Naive thymus-derived CD4-positive, alpha-beta T cell (primary cell): ENCODE measurements at regions of chr11 and their contacts with region 1.

Region 1: GRCh38 chr11:86174101-86175046 is 70.2 kb upstream of the EED start:
- DNase-seq: no peak
- ATAC-seq: peak; percentile 56
- H3K4me3 ChIP-seq: no peak overlapping the region
- H3K4me3 Mint-ChIP-seq: no peak overlapping the region
- H3K27ac ChIP-seq: no peak overlapping the region
- H3K27ac Mint-ChIP-seq: no peak overlapping the region
- H3K4me1 ChIP-seq: no peaks in the 10 kb centered on the region
- H3K4me1 Mint-ChIP-seq: peaks cover 0 to 25% (median 0%) of the 10 kb centered on the region in 7 donors
- H3K27me3 ChIP-seq: no peaks in the 10 kb centered on the region
- H3K27me3 Mint-ChIP-seq: peaks cover 0 to 13% (median 7%) of the 10 kb centered on the region in 5 donors

Region 2: DNA sequence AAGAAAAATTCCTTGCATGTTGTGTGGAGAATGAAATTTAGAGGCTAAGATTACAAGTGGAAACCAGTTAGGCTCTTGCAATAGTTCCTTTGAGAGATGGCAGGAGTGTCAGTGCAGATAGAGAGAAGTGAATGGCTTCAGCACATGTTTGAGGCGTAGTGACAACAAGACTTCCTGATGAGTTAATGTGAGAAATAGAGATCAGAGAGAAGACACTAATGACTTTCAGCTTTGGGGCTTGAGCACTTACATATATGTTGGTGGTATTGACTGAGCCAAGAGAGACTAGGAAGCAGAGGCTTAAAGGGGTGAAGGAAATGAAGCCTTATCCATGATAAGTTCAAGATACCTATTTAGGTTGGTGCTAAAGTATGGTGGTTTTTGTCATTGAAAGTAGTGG is 49.5 kb before region 1 on chr11:
- CTCF ChIA-PET with region 1: no interaction called
- POLR2A ChIA-PET with region 1: no interaction called
- intact Hi-C with region 1: loop called in 1 of 2 experiments (anchors 5 kb)
- DNase-seq: no peak
- ATAC-seq: no peak
- H3K4me3 ChIP-seq: no peak overlapping the region
- H3K4me3 Mint-ChIP-seq: no peak overlapping the region
- H3K27ac ChIP-seq: no peak overlapping the region
- H3K27ac Mint-ChIP-seq: peak overlapping the region in 1 of 9 donors; percentile 13
- H3K4me1 ChIP-seq: no peaks in the 10 kb centered on the region
- H3K4me1 Mint-ChIP-seq: peaks cover 0 to 10% (median 0%) of the 10 kb centered on the region in 7 donors
- H3K27me3 ChIP-seq: no peaks in the 10 kb centered on the region
- H3K27me3 Mint-ChIP-seq: peaks cover 0 to 10% (median 4%) of the 10 kb centered on the region in 5 donors

Region 3: GRCh38 chr11:86138958-86139357 is 35.4 kb before region 1 on chr11:
- CTCF ChIA-PET with region 1: no interaction called
- POLR2A ChIA-PET with region 1: no interaction called
- intact Hi-C with region 1: loop called in 1 of 2 experiments (anchors 5 kb)
- DNase-seq: peak in 1 of 9 donors; percentile 4
- ATAC-seq: peak; percentile 65
- H3K4me3 ChIP-seq: peak overlapping the region; percentile 5
- H3K4me3 Mint-ChIP-seq: peak overlapping the region in 9 of 10 donors; percentile 37 to 76 (median 45)
- H3K27ac ChIP-seq: no peak overlapping the region
- H3K27ac Mint-ChIP-seq: peak overlapping the region; percentile 7 to 87 (median 76)
- H3K4me1 ChIP-seq: peaks cover 4 to 30% of the 10 kb centered on the region in 2 donors
- H3K4me1 Mint-ChIP-seq: peaks cover 11 to 66% (median 16%) of the 10 kb centered on the region in 7 donors
- H3K27me3 ChIP-seq: no peaks in the 10 kb centered on the region
- H3K27me3 Mint-ChIP-seq: no peaks in the 10 kb centered on the region

Region 4: DNA sequence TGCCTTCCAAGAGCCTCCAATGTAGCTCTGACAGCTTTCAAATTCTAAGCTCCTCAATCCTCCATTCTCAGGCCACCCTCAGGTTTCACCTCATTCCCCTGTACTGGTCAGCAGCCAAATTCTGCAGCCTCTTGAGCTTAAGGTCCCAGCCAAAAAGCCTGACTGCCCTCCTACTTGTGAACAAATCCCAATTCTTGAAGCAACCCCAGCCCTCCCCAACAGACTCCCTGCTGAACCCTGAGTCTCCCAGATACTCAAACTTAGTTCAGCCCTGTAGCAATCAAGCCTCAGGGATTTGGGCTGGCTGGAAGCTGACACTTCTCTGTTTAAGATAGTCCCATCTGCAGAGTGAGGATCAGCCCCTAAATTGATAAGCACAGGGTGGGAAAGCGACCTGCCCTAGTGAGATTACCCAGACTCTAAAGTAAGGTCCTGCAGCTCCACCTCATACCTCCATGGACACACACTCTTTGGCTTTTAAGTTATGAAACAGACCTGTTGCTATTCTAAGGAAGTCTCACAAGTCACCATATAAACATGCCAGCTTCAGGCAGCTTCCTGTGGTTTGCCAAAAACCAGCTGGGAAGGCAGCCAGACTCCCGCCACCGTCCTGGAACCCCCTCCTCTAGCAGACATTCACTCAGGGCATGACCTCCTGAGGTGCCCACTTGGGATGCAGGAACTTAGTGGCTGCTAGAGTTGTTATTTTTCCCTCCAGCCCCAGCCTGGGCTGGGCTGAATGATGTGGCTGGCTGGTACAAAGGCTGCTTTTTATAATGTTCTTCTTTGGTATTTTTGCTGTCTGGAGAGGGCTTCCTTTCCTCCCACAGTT is 23.0 kb before region 1 on chr11:
- CTCF ChIA-PET with region 1: no interaction called
- POLR2A ChIA-PET with region 1: no interaction called
- intact Hi-C with region 1: loop called in 1 of 2 experiments (anchors 2 kb)
- DNase-seq: no peak
- ATAC-seq: no peak
- H3K4me3 ChIP-seq: no peak overlapping the region
- H3K4me3 Mint-ChIP-seq: peak overlapping the region in 1 of 10 donors; percentile 16
- H3K27ac ChIP-seq: no peak overlapping the region
- H3K27ac Mint-ChIP-seq: peak overlapping the region in 3 of 9 donors; percentile 0 to 72 (median 5)
- H3K4me1 ChIP-seq: peaks cover 0 to 10% of the 10 kb centered on the region in 2 donors
- H3K4me1 Mint-ChIP-seq: peaks cover 0 to 32% (median 13%) of the 10 kb centered on the region in 7 donors
- H3K27me3 ChIP-seq: no peaks in the 10 kb centered on the region
- H3K27me3 Mint-ChIP-seq: peaks cover 0 to 5% (median 0%) of the 10 kb centered on the region in 5 donors

Region 5: GRCh38 chr11:86193297-86194095 is 19.1 kb after region 1 on chr11:
- CTCF ChIA-PET with region 1: interaction called, 7 read pairs
- POLR2A ChIA-PET with region 1: no interaction called
- intact Hi-C with region 1: loop called in 1 of 2 experiments (anchors 1 kb)
- DNase-seq: peak; percentile 9 to 70 (median 65)
- ATAC-seq: peak; percentile 99
- H3K4me3 ChIP-seq: peak overlapping the region; percentile 36
- H3K4me3 Mint-ChIP-seq: peak overlapping the region; percentile 71 to 94 (median 88)
- H3K27ac ChIP-seq: no peak overlapping the region
- H3K27ac Mint-ChIP-seq: peak overlapping the region; percentile 21 to 91 (median 67)
- H3K4me1 ChIP-seq: peaks cover 5 to 7% of the 10 kb centered on the region in 2 donors
- H3K4me1 Mint-ChIP-seq: peaks cover 13 to 24% (median 15%) of the 10 kb centered on the region in 7 donors
- H3K27me3 ChIP-seq: no peaks in the 10 kb centered on the region
- H3K27me3 Mint-ChIP-seq: peaks cover 0 to 10% (median 3%) of the 10 kb centered on the region in 5 donors

Region 6: DNA sequence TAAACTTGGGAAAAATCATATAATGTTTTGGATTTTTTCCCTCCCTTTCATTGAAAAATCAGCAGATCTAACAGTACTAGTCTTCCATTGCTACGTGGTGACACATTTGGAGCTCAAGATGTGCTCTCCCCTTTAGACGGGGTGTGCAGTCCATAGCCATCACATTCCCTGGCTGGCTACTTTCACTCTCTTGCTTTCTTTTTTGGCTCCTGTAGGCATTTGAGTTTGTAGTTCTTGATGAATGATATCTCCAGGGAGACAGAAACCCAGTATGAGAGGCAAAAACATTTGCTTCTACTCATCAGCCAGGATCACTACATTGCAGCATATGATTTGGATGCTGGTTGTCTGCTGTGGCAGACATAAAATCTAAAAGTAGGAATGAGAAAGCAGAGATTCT is 212.4 kb after region 1 on chr11:
- CTCF ChIA-PET with region 1: no interaction called
- POLR2A ChIA-PET with region 1: no interaction called
- intact Hi-C with region 1: no loop called
- DNase-seq: no peak
- ATAC-seq: no peak
- H3K4me3 ChIP-seq: no peak overlapping the region
- H3K4me3 Mint-ChIP-seq: no peak overlapping the region
- H3K27ac ChIP-seq: no peak overlapping the region
- H3K27ac Mint-ChIP-seq: no peak overlapping the region
- H3K4me1 ChIP-seq: no peaks in the 10 kb centered on the region
- H3K4me1 Mint-ChIP-seq: no peaks in the 10 kb centered on the region
- H3K27me3 ChIP-seq: no peaks in the 10 kb centered on the region
- H3K27me3 Mint-ChIP-seq: no peaks in the 10 kb centered on the region